Mammary epithelial cell (primary cell): ENCODE measurements at regions of chr5 and their contacts with region 1.

Region 1: DNA sequence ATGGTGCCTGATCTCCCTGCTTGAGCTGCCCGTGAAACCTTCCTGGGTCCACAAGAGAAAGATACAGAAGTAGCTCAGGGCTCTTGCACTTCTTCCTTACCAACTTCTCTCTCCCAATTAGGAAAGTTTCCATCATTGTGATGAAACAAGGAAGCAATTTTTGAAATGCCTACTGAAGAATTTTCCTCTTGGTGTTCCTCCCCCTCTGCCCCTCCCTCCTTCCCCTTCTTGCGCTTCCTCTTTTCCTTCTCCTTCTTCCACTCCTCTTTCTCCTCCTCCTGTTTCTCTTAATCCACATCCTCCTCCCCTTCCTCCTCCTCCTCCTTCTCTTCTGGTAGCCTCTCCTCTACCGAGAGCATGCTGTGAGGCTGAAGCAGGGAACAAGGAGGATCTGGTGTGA is 36.3 kb upstream of the OTULINL start:
- DNase-seq: no peak
- H3K4me3 ChIP-seq: no peak overlapping the region
- H3K27ac ChIP-seq: no peak overlapping the region
- H3K4me1 ChIP-seq: no peaks in the 10 kb centered on the region
- H3K27me3 ChIP-seq: peaks cover 3% of the 10 kb centered on the region
- CTCF ChIP-seq: no peak

Region 2: DNA sequence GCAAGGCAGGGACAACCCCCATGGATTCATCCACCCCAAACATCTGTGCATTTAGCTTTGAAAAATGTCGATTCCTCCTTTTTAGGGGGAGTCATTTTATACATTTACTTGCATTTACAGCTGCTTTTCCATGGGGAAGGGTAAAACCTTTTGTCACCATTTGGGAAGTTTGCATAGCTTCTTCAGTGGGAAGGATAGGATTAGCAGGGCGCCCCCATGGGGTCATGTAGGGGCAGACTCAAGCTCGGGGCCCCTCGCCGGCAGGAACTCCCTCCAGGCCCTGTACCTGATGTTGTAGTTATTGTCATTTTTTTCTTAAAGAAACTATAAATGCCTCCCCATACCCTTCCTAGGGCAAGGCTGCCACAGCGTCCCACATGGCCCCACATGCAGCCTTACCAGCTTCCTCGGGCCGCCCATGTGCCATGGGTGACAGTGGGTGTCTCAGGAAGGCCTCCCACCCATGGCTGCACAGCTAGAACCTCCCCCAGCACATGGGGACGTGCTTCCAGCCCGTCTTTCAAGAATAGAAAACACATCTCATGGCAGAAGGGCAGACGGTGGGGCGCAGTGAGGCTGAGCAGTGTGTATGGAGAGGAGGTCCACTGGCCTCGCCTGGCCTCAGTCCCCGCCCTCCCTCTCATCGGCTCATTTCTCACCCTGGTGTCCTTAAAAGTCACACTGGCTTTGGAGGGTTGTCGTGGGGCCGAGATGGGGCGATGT is 39.8 kb before region 1 on chr5:
- CTCF ChIA-PET with region 1: no interaction called
- dilution Hi-C with region 1: loop called (anchors 5 kb)
- in situ Hi-C with region 1: no loop called
- intact Hi-C with region 1: no loop called
- DNase-seq: no peak
- H3K4me3 ChIP-seq: no peak overlapping the region
- H3K27ac ChIP-seq: no peak overlapping the region
- H3K4me1 ChIP-seq: no peaks in the 10 kb centered on the region
- H3K27me3 ChIP-seq: no peaks in the 10 kb centered on the region
- CTCF ChIP-seq: no peak